Aorta (tissue), 5 donors: ENCODE measurements at regions of chr2 and their contacts with region 1.

Region 1: GRCh38 chr2:209556354-209556961 is 132.6 kb downstream of the MAP2 start:
- DNase-seq: no peak
- ATAC-seq: no peak
- H3K4me3 ChIP-seq: no peak overlapping the region
- H3K27ac ChIP-seq: no peak overlapping the region
- H3K4me1 ChIP-seq: no peaks in the 10 kb centered on the region
- H3K27me3 ChIP-seq: no peaks in the 10 kb centered on the region

Region 2: DNA sequence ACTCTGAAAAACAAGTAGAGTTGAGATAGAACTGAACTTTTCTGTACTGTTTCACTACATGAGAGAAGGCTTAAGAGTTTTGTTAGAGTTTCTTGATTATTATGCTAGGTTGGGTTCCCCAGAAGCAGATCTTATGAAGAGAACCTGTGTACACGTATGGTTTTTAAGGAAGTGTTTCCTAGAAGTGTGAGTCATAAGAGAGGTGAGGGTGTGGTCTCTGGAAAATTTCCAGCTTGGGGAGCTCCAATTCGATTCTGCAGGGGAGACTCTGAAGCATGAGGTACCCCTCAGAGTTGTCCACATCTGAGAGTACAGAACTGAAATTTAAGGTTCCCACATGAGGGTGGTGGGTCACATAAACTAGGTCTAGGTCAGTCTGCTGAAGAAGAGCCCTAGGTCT is 215.9 kb before region 1 on chr2:
- intact Hi-C with region 1: loop called (anchors 5 kb)
- DNase-seq: no peak
- ATAC-seq: no peak
- H3K4me3 ChIP-seq: no peak overlapping the region
- H3K27ac ChIP-seq: no peak overlapping the region
- H3K4me1 ChIP-seq: no peaks in the 10 kb centered on the region
- H3K27me3 ChIP-seq: no peaks in the 10 kb centered on the region

Region 3: GRCh38 chr2:209423562-209424198 is 132.8 kb before region 1 on chr2 and contains the start of gene MAP2:
- intact Hi-C with region 1: loop called (anchors 1 to 5 kb)
- DNase-seq: peak; percentile 90 to 96
- ATAC-seq: peak; percentile 96
- H3K4me3 ChIP-seq: peak within 1 kb of the TSS; percentile 50 to 81
- H3K27ac ChIP-seq: peak within 1 kb of the TSS; percentile 30 to 70
- H3K4me1 ChIP-seq: no peaks in the 10 kb centered on the region
- H3K27me3 ChIP-seq: no peaks in the 10 kb centered on the region
- total RNA-seq, gene MAP2: 19.6 to 59.7 TPM

Region 4: DNA sequence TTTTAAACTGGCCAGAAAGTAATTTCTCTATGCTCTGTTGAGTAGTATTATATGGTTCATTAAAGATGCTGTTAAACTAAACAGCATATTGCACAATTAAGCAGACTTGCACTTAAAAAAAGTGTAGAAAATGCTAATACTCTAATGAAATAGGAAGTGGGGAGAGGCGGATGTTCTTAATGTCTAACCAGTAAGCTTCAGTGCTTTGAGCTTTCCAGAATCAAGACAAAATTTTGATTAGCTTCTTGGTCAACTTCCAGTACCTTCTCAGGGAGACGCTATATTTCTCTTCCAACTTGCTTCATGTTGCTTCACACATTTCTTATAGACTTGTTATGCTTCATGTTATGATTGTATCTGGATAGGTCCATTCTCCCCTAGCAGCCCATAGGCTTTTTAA is 43.5 kb before region 1 on chr2:
- intact Hi-C with region 1: no loop called
- DNase-seq: no peak
- ATAC-seq: no peak
- H3K4me3 ChIP-seq: no peak overlapping the region
- H3K27ac ChIP-seq: no peak overlapping the region
- H3K4me1 ChIP-seq: no peaks in the 10 kb centered on the region
- H3K27me3 ChIP-seq: no peaks in the 10 kb centered on the region

Region 5: GRCh38 chr2:209922116-209922515 is 365.7 kb after region 1 on chr2:
- intact Hi-C with region 1: no loop called
- DNase-seq: no peak
- ATAC-seq: no peak
- H3K4me3 ChIP-seq: no peak overlapping the region
- H3K27ac ChIP-seq: no peak overlapping the region
- H3K4me1 ChIP-seq: no peaks in the 10 kb centered on the region
- H3K27me3 ChIP-seq: no peaks in the 10 kb centered on the region